Body of pancreas (tissue), 4 donors: ENCODE measurements at regions of chr1 and their contacts with region 1.

Region 1: GRCh38 chr1:152189657-152190442 is 30.8 kb upstream of the RPTN start:
- DNase-seq: peak; percentile 55 to 71 (median 62)
- ATAC-seq: peak; percentile 47
- H3K4me3 ChIP-seq: no peak overlapping the region
- H3K27ac ChIP-seq: no peak overlapping the region
- H3K4me1 ChIP-seq: no peaks in the 10 kb centered on the region
- H3K27me3 ChIP-seq: no peaks in the 10 kb centered on the region
- CTCF ChIP-seq: peak; percentile 45 to 73 (median 61)
- POLR2A ChIP-seq: no peak

Region 2: DNA sequence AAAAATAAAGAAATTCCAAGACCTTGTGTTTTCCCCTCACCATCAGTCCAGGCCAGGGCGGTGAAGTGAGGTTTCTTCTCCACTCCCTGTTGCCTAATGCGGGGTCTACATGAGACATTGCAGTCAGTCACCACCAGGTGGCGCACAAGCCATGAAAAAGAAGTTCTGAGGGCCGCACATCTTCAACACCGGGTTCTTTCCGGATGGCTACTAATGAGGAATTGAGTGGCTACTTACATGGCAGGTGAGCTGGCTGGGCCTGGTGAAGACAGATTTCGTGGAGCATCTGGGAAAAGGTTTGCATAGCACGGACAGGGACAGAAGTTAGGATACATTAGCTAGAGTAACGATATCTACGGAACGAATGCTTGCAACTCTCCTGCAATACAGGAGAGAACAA is 137.2 kb before region 1 on chr1:
- intact Hi-C with region 1: loop called (anchors 5 kb)
- DNase-seq: peak; percentile 86 to 90 (median 88)
- ATAC-seq: peak; percentile 22
- H3K4me3 ChIP-seq: no peak overlapping the region
- H3K27ac ChIP-seq: no peak overlapping the region
- H3K4me1 ChIP-seq: peaks cover 14% of the 10 kb centered on the region
- H3K27me3 ChIP-seq: no peaks in the 10 kb centered on the region
- CTCF ChIP-seq: peak; percentile 69 to 93 (median 88)
- POLR2A ChIP-seq: no peak

Region 3: GRCh38 chr1:152459596-152460528 is 270.0 kb after region 1 on chr1:
- intact Hi-C with region 1: loop called (anchors 10 kb)
- DNase-seq: peak; percentile 70 to 77 (median 75)
- ATAC-seq: peak; percentile 68
- H3K4me3 ChIP-seq: no peak overlapping the region
- H3K27ac ChIP-seq: no peak overlapping the region
- H3K4me1 ChIP-seq: no peaks in the 10 kb centered on the region
- H3K27me3 ChIP-seq: no peaks in the 10 kb centered on the region
- CTCF ChIP-seq: peak; percentile 45 to 77 (median 63)
- POLR2A ChIP-seq: no peak